Activated CD8-positive, alpha-beta T cell treated with anti-CD3 and anti-CD28 coated beads, Interleukin-2, amount 10 ng/mL, durations not matched to agents 7 days and 5 days (primary cell): ENCODE measurements at regions of chr11 and their contacts with region 1.

Region 1: GRCh38 chr11:7892840-7893254 is 38.2 kb downstream of the OR10A6 start:
- DNase-seq: no peak
- ATAC-seq: peak; percentile 61
- H3K4me3 Mint-ChIP-seq: no peak overlapping the region
- H3K27ac Mint-ChIP-seq: no peak overlapping the region
- H3K4me1 Mint-ChIP-seq: peaks cover 3% of the 10 kb centered on the region
- H3K27me3 Mint-ChIP-seq: peaks cover 5% of the 10 kb centered on the region

Region 2: DNA sequence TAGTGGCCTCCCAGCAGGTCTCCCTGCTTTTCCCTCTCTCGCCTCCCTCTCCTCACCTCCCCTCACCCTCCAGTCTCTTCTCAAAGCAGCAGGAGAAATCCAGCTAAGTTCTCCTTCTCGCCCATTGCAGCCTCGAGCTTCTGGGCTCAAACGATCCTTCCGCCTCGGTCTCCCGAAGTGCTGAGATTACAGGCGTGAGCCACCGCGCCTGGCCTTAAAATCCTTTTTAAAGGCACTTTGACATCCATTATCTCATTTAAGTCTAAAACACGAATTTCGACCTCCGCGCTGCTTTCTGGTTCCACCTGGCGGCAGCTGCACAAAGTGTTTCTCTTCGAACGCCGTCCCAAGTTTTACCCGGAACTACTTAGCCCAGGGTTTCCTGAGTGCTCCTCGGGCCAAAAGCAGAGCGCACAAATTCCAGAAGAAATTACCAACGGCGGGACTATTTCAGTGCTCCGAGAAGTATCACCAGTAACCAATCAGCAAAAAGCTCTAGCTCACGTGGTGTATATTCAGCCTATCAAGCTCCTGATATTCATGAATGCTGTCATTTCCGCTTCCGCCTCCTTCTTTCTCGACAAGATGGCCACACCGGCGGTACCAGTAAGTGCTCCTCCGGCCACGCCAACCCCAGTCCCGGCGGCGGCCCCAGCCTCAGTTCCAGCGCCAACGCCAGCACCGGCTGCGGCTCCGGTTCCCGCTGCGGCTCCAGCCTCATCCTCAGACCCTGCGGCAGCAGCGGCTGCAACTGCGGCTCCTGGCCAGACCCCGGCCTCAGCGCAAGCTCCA is 94.1 kb after region 1 on chr11 and contains the start of gene EIF3F:
- CTCF ChIA-PET with region 1: interaction called, 97 read pairs
- POLR2A ChIA-PET with region 1: no interaction called
- DNase-seq: peak; percentile 96
- ATAC-seq: peak; percentile 99
- H3K4me3 Mint-ChIP-seq: peak within 1 kb of the TSS; percentile 94
- H3K27ac Mint-ChIP-seq: peak within 1 kb of the TSS; percentile 94
- H3K4me1 Mint-ChIP-seq: peaks cover 35% of the 10 kb centered on the region
- H3K27me3 Mint-ChIP-seq: no peaks in the 10 kb centered on the region
- total RNA-seq, gene EIF3F: 212 to 222 TPM